Breast epithelium (tissue), 4 donors: ENCODE measurements at regions of chr1 and their contacts with region 1.

Region 1: DNA sequence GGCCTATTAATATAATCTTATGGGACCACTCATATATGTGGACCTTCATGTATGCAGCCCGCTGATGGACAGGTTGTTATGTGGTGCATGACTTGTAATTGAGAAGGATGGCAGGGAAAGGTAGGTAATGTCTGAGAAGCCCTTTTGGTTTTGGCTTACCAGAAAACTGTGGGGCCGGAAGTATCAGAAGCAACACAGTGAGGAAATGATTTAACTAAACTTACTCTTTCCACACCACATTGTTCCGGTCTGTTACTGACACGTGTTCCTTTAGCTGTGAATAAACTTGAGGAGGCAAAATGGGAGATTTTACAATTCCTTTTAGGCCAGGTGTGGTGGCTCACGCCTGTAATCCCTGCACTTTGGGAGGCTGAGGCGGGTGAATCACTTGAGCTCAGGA is 32.4 kb downstream of the KIF1B start:
- DNase-seq: no peak
- H3K4me3 ChIP-seq: no peak overlapping the region
- H3K27ac ChIP-seq: no peak overlapping the region
- H3K4me1 ChIP-seq: no peaks in the 10 kb centered on the region
- H3K27me3 ChIP-seq: no peaks in the 10 kb centered on the region
- CTCF ChIP-seq: no peak
- POLR2A ChIP-seq: no peak

Region 2: GRCh38 chr1:10257851-10258250 is 15.0 kb after region 1 on chr1:
- intact Hi-C with region 1: no loop called
- DNase-seq: no peak
- H3K4me3 ChIP-seq: no peak overlapping the region
- H3K27ac ChIP-seq: no peak overlapping the region
- H3K4me1 ChIP-seq: no peaks in the 10 kb centered on the region
- H3K27me3 ChIP-seq: no peaks in the 10 kb centered on the region
- CTCF ChIP-seq: no peak
- POLR2A ChIP-seq: no peak

Region 3: GRCh38 chr1:10657088-10657847 is 414.5 kb after region 1 on chr1:
- intact Hi-C with region 1: loop called (anchors 5 kb)
- DNase-seq: no peak
- H3K4me3 ChIP-seq: no peak overlapping the region
- H3K27ac ChIP-seq: no peak overlapping the region
- H3K4me1 ChIP-seq: no peaks in the 10 kb centered on the region
- H3K27me3 ChIP-seq: no peaks in the 10 kb centered on the region
- CTCF ChIP-seq: no peak
- POLR2A ChIP-seq: no peak